ENCODE measurements at regions of chr6 and their contacts with region 1.

Region 1: DNA sequence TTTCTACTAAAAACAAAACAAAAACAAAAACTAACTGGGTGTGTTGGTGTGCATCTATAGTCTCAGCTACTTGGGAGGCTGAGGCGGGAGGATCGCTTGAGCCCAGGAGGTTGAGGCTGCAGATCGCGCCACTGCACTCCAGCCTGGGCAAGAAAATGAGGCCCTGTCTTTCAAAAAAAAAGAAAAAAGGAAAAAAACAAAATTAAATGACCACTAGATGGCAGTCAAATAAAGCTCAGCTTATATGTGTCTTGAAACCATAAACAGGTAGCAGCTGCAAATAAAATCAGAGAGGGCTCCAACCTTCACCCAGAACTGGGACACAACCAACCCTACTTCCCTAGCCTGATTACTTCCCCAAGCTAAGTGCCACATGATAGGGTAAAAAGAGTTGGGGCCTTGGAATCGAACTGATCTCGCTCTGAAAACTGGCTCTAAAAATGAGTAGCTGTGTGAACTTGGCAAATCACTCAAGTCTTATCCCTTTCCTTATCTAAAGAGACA is 67.1 kb upstream of the ADGRF4 start:
- DNase-seq: peak; percentile 19
- H3K4me3 ChIP-seq: no peak overlapping the region
- H3K27ac ChIP-seq: no peak overlapping the region
- H3K4me1 ChIP-seq: peaks cover 0 to 11% of the 10 kb centered on the region in 2 experiments; a peak in 2 of 4 replicates
- H3K27me3 ChIP-seq: no peaks in the 10 kb centered on the region
- CTCF ChIP-seq: peak; percentile 73
- EP300 ChIP-seq: no peak
- RAD21 ChIP-seq: peak; percentile 71

Region 2: GRCh38 chr6:47376930-47377329 is 254.4 kb before region 1 on chr6:
- CTCF ChIA-PET with region 1: no interaction called
- POLR2A ChIA-PET with region 1: no interaction called
- DNase-seq: no peak
- H3K4me3 ChIP-seq: no peak overlapping the region
- H3K27ac ChIP-seq: no peak overlapping the region
- H3K4me1 ChIP-seq: no peaks in the 10 kb centered on the region
- H3K27me3 ChIP-seq: peaks cover 18% of the 10 kb centered on the region; the same call in 1 of the 2 replicates
- CTCF ChIP-seq: no peak
- EP300 ChIP-seq: no peak
- RAD21 ChIP-seq: no peak

Region 3: DNA sequence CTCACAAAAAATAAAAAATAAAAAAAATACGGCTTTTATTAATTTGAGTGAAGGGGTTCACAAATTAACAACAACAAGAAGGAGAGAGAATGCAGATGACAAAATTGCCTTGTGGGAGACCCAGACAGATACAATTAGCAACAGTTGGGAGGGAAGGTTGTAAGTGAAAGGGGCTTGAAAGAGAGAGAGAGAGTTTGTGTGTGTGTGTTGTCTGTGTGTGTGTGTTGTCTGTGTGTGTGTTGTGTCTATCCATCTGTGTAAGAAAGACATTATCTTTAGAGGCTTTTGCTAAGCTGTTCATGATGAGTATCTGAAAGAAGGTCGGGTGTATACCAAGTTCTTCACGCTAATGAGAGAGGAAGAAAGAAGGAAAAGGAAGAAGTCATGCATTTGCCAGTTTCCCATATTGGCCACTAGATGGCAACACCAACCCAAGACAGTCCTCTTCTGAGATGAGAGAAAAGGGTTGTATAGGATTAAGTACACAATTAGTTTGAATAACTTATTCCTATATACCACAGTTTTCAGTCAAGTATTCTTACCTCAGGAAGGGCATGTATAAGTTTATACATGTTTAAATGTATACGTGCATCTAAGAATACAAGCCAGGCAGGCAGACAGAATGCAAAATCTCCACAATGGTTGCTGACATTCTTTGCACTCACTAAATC is 217.4 kb before region 1 on chr6:
- CTCF ChIA-PET with region 1: interaction called, 10 read pairs
- POLR2A ChIA-PET with region 1: no interaction called
- DNase-seq: peak; percentile 45
- H3K4me3 ChIP-seq: peak overlapping the region; percentile 45 to 56
- H3K27ac ChIP-seq: no peak overlapping the region
- H3K4me1 ChIP-seq: peaks cover 0 to 2% of the 10 kb centered on the region in 2 experiments; a peak in 1 of 4 replicates
- H3K27me3 ChIP-seq: peaks cover 4% of the 10 kb centered on the region; the same call in 1 of the 2 replicates
- CTCF ChIP-seq: peak; percentile 95
- EP300 ChIP-seq: no peak
- RAD21 ChIP-seq: peak; percentile 85

Region 4: DNA sequence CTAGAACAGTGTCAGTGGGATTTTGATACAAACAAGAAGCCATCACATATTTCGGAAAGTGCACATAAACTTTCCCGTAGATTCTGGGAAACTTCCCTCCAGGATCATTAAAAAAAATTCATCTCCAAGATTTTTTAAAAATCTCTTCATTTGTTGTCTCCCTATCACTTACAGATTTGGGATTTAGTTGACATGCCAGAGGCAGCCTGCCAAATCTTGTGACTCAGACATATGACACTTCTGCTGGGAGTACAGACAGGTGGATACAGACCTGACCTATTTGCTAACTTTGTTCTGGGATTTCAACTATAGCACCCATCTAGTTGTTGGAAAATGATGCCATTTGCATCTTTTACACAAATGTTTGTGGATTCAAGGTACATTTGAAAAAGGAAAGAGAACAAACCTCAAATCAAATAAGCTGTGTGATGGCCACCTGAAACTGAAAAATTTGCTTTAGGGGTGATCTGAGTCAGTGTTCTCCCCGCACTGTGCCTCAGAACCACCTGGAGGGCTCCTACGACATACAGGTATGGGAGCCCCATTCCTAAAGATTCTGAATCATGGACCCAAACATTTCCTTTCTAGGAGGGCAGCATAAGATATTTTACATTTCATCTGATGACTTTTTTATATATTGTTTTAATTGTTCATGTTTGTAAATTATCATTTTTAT is 175.6 kb before region 1 on chr6:
- CTCF ChIA-PET with region 1: no interaction called
- POLR2A ChIA-PET with region 1: no interaction called
- DNase-seq: no peak
- H3K4me3 ChIP-seq: no peak overlapping the region
- H3K27ac ChIP-seq: no peak overlapping the region
- H3K4me1 ChIP-seq: no peaks in the 10 kb centered on the region
- H3K27me3 ChIP-seq: peaks cover 11% of the 10 kb centered on the region; the same call in 1 of the 2 replicates
- CTCF ChIP-seq: no peak
- EP300 ChIP-seq: no peak
- RAD21 ChIP-seq: no peak

Region 5: DNA sequence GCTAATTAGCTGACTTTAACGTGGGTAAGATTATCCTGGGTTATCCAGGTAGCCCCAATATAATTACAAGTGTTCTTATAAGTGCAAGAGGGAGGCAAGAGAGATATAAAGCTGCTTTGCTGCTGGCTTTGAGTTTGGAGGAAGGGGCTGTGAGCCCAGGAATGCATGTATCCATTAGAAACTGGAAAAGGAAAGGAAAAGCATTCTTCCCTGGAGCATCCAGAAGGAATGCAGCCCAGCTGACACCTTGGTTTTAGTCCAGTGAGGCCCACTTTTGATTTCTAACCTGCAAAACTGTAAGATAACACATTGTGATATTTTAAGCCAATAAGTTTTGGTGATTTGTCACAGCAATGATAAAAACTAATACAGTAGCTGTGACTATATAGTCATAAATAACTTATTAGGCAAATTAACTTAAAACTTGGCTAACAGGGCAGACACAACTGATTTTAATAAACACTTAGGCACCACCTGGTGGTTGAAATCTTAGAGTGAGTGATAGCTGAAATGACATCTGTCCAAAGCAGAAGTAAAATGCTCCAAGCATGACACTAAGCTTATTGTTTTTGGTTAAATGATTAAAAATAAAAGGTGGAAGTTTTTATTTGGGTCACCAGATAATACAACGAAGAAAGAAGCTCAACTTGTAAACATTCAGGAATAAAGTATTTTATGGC is 102.7 kb after region 1 on chr6:
- CTCF ChIA-PET with region 1: interaction called, 25 read pairs
- POLR2A ChIA-PET with region 1: no interaction called
- DNase-seq: peak; percentile 1
- H3K4me3 ChIP-seq: no peak overlapping the region
- H3K27ac ChIP-seq: no peak overlapping the region
- H3K4me1 ChIP-seq: no peaks in the 10 kb centered on the region
- H3K27me3 ChIP-seq: no peaks in the 10 kb centered on the region; the same call in 1 of the 2 replicates
- CTCF ChIP-seq: peak; percentile 37
- EP300 ChIP-seq: no peak
- RAD21 ChIP-seq: peak; percentile 34; the same call in 1 of the 2 replicates

Region 6: GRCh38 chr6:47780510-47781356 is 149.4 kb after region 1 on chr6:
- CTCF ChIA-PET with region 1: interaction called, 62 read pairs
- POLR2A ChIA-PET with region 1: no interaction called
- DNase-seq: peak; percentile 23
- H3K4me3 ChIP-seq: peak overlapping the region in 1 of 2 experiments; percentile 0; a peak in 1 of 4 replicates
- H3K27ac ChIP-seq: no peak overlapping the region
- H3K4me1 ChIP-seq: no peaks in the 10 kb centered on the region
- H3K27me3 ChIP-seq: peaks cover 25% of the 10 kb centered on the region; the same call in 1 of the 2 replicates
- CTCF ChIP-seq: peak; percentile 77
- EP300 ChIP-seq: no peak
- RAD21 ChIP-seq: peak; percentile 72